Esophagus muscularis mucosa (tissue), 4 donors: ENCODE measurements at regions of chr15 and their contacts with region 1.

Region 1: DNA sequence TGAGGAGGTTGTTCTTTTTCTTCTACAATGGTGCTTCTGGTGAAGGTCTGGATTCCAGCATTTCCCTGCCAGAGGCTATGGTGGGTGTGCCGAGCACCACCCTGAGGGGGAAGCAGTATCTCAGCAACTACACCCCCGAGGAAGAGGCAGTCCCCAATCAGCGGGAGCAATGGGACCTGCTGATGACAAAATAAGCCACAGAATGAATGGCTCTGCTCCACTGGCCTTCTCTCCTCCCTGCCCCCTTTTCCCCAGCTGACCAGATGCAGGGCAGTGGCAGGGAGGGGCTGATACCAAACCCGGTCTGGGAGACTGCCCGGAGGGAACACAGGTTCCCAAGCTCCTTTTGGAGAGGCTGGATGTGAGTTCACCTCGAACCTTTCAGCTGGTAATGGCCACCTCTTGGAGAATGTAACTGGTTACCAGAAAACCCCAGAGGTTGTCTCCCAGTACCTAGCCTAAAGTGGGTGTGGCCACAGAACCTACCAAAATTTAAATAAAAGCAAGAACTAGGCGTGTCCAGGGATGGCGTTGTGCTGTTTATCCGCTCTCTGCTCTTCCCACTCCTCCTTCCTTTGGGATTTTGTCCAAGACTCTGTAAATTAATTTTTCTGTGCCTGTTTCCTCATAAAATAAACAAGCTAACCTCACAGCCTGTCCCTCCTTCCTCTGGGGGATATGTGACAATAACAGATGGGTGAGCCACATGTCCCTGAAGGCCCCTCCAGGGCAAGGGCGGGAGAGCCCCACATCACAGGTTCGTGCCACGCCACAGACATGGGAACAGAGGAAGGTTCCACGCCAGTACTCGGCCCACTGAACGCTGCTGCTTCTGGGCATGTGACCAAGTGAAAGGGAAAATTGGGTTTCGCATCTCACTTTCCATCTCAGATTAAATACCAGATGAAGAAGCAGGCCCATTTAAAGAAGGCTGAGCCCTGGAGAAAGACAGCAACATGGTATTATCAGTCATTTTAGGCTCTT is 35.1 kb upstream of the SPTBN5 start:
- DNase-seq: no peak
- H3K4me3 ChIP-seq: no peak overlapping the region
- H3K27ac ChIP-seq: peak overlapping the region; percentile 62 to 74 (median 66)
- H3K4me1 ChIP-seq: peaks cover 66 to 95% (median 82%) of the 10 kb centered on the region in 4 donors
- H3K27me3 ChIP-seq: no peaks in the 10 kb centered on the region
- CTCF ChIP-seq: no peak
- EP300 ChIP-seq: no peak
- POLR2A ChIP-seq: no peak

Region 2: GRCh38 chr15:41713047-41713446 is 215.9 kb before region 1 on chr15:
- intact Hi-C with region 1: no loop called
- DNase-seq: no peak
- H3K4me3 ChIP-seq: no peak overlapping the region
- H3K27ac ChIP-seq: peak overlapping the region in 2 of 4 donors; percentile 0 to 11
- H3K4me1 ChIP-seq: peaks cover 6 to 13% (median 10%) of the 10 kb centered on the region in 4 donors
- H3K27me3 ChIP-seq: no peaks in the 10 kb centered on the region
- CTCF ChIP-seq: no peak
- EP300 ChIP-seq: no peak
- POLR2A ChIP-seq: no peak

Region 3: GRCh38 chr15:41972253-41973242 is 43.6 kb after region 1 on chr15 and contains the start of gene EHD4:
- intact Hi-C with region 1: loop called (anchors 5 kb)
- DNase-seq: peak; percentile 99
- H3K4me3 ChIP-seq: peak within 1 kb of the TSS; percentile 82 to 97 (median 88)
- H3K27ac ChIP-seq: peak within 1 kb of the TSS; percentile 83 to 90 (median 84)
- H3K4me1 ChIP-seq: peaks cover 29 to 48% (median 40%) of the 10 kb centered on the region in 4 donors
- H3K27me3 ChIP-seq: peaks cover 0 to 6% (median 0%) of the 10 kb centered on the region in 4 donors
- CTCF ChIP-seq: peak in 2 of 3 experiments; percentile 23 to 34
- EP300 ChIP-seq: no peak
- POLR2A ChIP-seq: peak; percentile 69
- total RNA-seq, gene EHD4: 10.0 to 24.7 (median 21.7) TPM